Endothelial cell of umbilical vein (primary cell): ENCODE measurements at regions of chr20 and their contacts with region 1.

Region 1: DNA sequence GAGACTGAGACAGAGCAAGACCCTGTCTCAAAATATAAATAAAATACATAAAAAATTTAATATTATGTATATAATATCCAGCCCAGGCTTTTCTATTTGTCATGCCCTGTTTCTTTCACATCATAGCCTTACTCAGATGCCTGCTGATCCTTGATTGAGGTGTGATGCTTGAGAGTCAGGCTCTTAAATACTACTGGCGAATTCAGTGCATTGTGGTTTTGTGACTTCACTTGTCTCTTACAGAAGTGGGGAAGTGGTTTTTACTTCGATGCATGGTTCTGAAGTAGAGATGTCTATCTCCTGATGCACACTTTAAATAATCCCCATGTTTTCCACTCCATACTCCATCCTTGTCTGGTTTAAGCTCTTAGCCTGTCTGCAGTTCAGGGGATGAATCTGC is 29.1 kb downstream of the ASXL1 start:
- DNase-seq: no peak
- H3K4me3 ChIP-seq: no peak overlapping the region
- H3K27ac ChIP-seq: no peak overlapping the region
- H3K4me1 ChIP-seq: no peaks in the 10 kb centered on the region
- H3K27me3 ChIP-seq: no peaks in the 10 kb centered on the region
- CTCF ChIP-seq: no peak
- POLR2A ChIP-seq: no peak

Region 2: DNA sequence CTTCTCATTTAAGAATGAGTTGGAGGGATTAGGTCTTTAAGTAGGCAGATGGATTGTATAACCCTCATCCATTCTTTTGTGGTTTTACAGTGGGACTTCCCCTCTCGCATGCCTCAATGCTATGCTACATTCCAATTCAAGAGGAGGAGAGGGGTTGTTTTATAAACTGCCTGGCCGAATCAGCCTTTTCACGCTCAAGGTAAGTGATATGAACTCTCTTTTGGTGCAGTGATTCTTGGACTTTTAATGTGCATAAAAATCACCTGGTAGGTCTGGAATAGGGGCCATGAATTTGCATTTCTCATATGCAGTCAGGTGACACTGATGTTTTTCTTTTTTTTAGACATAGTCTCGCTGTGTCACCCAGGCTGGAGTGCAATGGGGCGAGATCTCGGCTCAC is 18.3 kb before region 1 on chr20:
- CTCF ChIA-PET with region 1: interaction called, 6 read pairs
- POLR2A ChIA-PET with region 1: no interaction called
- dilution Hi-C with region 1: no loop called
- intact Hi-C with region 1: loop called (anchors 1 kb)
- DNase-seq: no peak
- H3K4me3 ChIP-seq: no peak overlapping the region
- H3K27ac ChIP-seq: no peak overlapping the region
- H3K4me1 ChIP-seq: peaks cover 3% of the 10 kb centered on the region
- H3K27me3 ChIP-seq: no peaks in the 10 kb centered on the region
- CTCF ChIP-seq: no peak
- POLR2A ChIP-seq: no peak

Region 3: DNA sequence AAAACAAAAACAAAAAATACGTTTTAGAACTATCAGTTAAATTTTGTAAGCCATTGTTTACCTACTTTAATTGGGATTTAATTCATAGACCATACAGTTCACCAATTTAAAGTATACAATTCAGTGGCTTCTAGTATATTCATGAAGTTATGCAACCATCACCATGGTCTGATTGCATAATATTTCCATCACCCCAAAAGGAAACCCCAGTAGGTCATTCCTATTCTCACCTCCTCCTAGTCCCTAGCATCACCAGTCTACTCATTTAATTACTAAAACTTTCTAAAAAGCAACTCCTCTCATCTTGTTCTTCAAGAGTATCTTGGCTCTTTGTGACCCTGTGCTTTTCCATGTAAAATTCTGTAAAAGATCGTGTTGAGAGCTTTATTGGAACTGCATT is 31.1 kb after region 1 on chr20:
- CTCF ChIA-PET with region 1: interaction called, 3 read pairs
- POLR2A ChIA-PET with region 1: interaction called, 10 read pairs
- dilution Hi-C with region 1: no loop called
- intact Hi-C with region 1: no loop called
- DNase-seq: no peak
- H3K4me3 ChIP-seq: no peak overlapping the region
- H3K27ac ChIP-seq: no peak overlapping the region
- H3K4me1 ChIP-seq: no peaks in the 10 kb centered on the region
- H3K27me3 ChIP-seq: no peaks in the 10 kb centered on the region
- CTCF ChIP-seq: no peak
- POLR2A ChIP-seq: no peak

Region 4: DNA sequence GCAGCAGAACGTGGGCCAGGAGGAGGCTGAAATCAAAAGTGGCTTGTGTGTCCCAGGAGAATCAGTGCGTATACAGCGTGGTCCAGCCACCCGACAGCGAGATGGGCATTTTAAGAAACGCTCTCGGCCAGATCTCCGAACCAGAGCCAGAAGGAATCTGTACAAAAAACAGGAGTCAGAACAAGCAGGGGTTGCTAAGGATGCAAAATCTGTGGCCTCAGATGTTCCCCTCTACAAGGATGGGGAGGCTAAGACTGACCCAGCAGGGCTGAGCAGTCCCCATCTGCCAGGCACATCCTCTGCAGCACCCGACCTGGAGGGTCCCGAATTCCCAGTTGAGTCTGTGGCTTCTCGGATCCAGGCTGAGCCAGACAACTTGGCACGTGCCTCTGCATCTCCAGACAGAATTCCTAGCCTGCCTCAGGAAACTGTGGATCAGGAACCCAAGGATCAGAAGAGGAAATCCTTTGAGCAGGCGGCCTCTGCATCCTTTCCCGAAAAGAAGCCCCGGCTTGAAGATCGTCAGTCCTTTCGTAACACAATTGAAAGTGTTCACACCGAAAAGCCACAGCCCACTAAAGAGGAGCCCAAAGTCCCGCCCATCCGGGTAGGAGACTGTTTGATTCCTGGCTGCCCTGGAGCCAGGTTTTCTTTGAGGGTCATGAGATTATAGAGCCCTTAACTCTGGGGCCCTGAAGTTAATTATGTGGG is 46.2 kb after region 1 on chr20:
- CTCF ChIA-PET with region 1: no interaction called
- POLR2A ChIA-PET with region 1: no interaction called
- dilution Hi-C with region 1: no loop called
- intact Hi-C with region 1: no loop called
- DNase-seq: peak; percentile 87
- H3K4me3 ChIP-seq: no peak overlapping the region
- H3K27ac ChIP-seq: peak overlapping the region; percentile 75
- H3K4me1 ChIP-seq: peaks cover 32% of the 10 kb centered on the region
- H3K27me3 ChIP-seq: no peaks in the 10 kb centered on the region
- CTCF ChIP-seq: no peak
- POLR2A ChIP-seq: peak; percentile 17